K562 (cell line): ENCODE measurements at regions of chr1 and their contacts with region 1.

Region 1: GRCh38 chr1:59971464-59971911 is 44.9 kb upstream of the CYP2J2 start:
- DNase-seq: peak; percentile 72 to 79 (median 76)
- ATAC-seq: peak; percentile 89
- H3K4me3 ChIP-seq: no peak overlapping the region
- H3K27ac ChIP-seq: no peak overlapping the region
- H3K4me1 ChIP-seq: peaks cover 3 to 11% of the 10 kb centered on the region in 2 experiments; a peak in 3 of 5 replicates
- H3K27me3 ChIP-seq: peaks cover 7 to 10% of the 10 kb centered on the region in 2 experiments; a peak in 2 of 5 replicates
- CTCF ChIP-seq: peak; percentile 72 to 88 (median 84)
- EP300 ChIP-seq: no peak
- POLR2A ChIP-seq: no peak
- RAD21 ChIP-seq: peak; percentile 63 to 81

Region 2: GRCh38 chr1:59845091-59845490 is 126.4 kb before region 1 on chr1:
- CTCF ChIA-PET with region 1: no interaction called
- POLR2A ChIA-PET with region 1: no interaction called
- in situ Hi-C with region 1: no loop called
- intact Hi-C with region 1: no loop called
- DNase-seq: no peak
- ATAC-seq: no peak
- H3K4me3 ChIP-seq: no peak overlapping the region
- H3K27ac ChIP-seq: no peak overlapping the region
- H3K4me1 ChIP-seq: no peaks in the 10 kb centered on the region
- H3K27me3 ChIP-seq: no peaks in the 10 kb centered on the region
- CTCF ChIP-seq: no peak
- EP300 ChIP-seq: no peak
- POLR2A ChIP-seq: no peak
- RAD21 ChIP-seq: no peak

Region 3: GRCh38 chr1:60281360-60281932 is 310.0 kb after region 1 on chr1:
- CTCF ChIA-PET with region 1: no interaction called
- POLR2A ChIA-PET with region 1: no interaction called
- in situ Hi-C with region 1: no loop called
- intact Hi-C with region 1: loop called (anchors 10 kb)
- DNase-seq: peak; percentile 13 to 54 (median 34)
- ATAC-seq: peak; percentile 93
- H3K4me3 ChIP-seq: no peak overlapping the region
- H3K27ac ChIP-seq: no peak overlapping the region
- H3K4me1 ChIP-seq: no peaks in the 10 kb centered on the region
- H3K27me3 ChIP-seq: no peaks in the 10 kb centered on the region
- CTCF ChIP-seq: peak; percentile 61 to 79 (median 77)
- EP300 ChIP-seq: no peak
- POLR2A ChIP-seq: no peak
- RAD21 ChIP-seq: peak; percentile 88 to 90

Region 4: DNA sequence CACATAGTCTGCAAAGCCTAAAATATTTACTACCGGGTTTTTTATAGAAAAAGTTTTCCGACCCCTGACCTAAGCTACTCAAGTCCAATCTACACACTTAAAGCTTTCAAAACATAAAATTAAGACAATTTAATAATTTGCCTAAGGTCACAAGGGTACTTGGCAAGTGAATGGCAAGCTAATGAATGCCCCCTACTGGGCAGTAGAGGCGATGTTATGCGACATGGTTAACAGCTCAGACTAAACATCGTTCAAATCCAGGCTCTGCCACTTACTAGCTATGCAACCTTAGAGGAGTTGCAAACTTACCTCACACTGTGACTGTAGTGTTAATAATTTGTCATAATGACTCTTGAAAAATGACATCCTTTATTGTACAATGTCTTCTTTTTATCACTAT is 793.7 kb after region 1 on chr1:
- CTCF ChIA-PET with region 1: interaction called, 3 read pairs
- POLR2A ChIA-PET with region 1: no interaction called
- in situ Hi-C with region 1: no loop called
- intact Hi-C with region 1: loop called (anchors 2 kb)
- DNase-seq: peak; percentile 43 to 58 (median 56)
- ATAC-seq: peak; percentile 97
- H3K4me3 ChIP-seq: no peak overlapping the region
- H3K27ac ChIP-seq: no peak overlapping the region
- H3K4me1 ChIP-seq: no peaks in the 10 kb centered on the region
- H3K27me3 ChIP-seq: no peaks in the 10 kb centered on the region
- CTCF ChIP-seq: peak; percentile 55 to 76 (median 68)
- EP300 ChIP-seq: no peak
- POLR2A ChIP-seq: no peak
- RAD21 ChIP-seq: peak; percentile 50 to 84

Region 5: GRCh38 chr1:60969971-60970509 is 998.6 kb after region 1 on chr1:
- CTCF ChIA-PET with region 1: no interaction called
- POLR2A ChIA-PET with region 1: no interaction called
- in situ Hi-C with region 1: no loop called
- intact Hi-C with region 1: loop called (anchors 5 kb)
- DNase-seq: peak in 2 of 4 experiments; percentile 52 to 55
- ATAC-seq: peak; percentile 83
- H3K4me3 ChIP-seq: no peak overlapping the region
- H3K27ac ChIP-seq: no peak overlapping the region
- H3K4me1 ChIP-seq: peaks cover 3 to 19% of the 10 kb centered on the region in 2 experiments; a peak in 4 of 5 replicates
- H3K27me3 ChIP-seq: no peaks in the 10 kb centered on the region
- CTCF ChIP-seq: peak; percentile 45 to 74 (median 67); a peak in 5 of 6 replicates
- EP300 ChIP-seq: no peak
- POLR2A ChIP-seq: no peak
- RAD21 ChIP-seq: peak; percentile 76 to 89

Region 6: GRCh38 chr1:61453111-61453961 is 1481.8 kb after region 1 on chr1:
- CTCF ChIA-PET with region 1: no interaction called
- POLR2A ChIA-PET with region 1: no interaction called
- in situ Hi-C with region 1: loop called (anchors 25 kb)
- intact Hi-C with region 1: no loop called
- DNase-seq: peak; percentile 59 to 85 (median 68)
- ATAC-seq: peak; percentile 97
- H3K4me3 ChIP-seq: no peak overlapping the region
- H3K27ac ChIP-seq: no peak overlapping the region
- H3K4me1 ChIP-seq: peaks cover 3 to 7% of the 10 kb centered on the region in 2 experiments; a peak in 3 of 5 replicates
- H3K27me3 ChIP-seq: no peaks in the 10 kb centered on the region
- CTCF ChIP-seq: peak; percentile 74 to 85 (median 83)
- EP300 ChIP-seq: no peak
- POLR2A ChIP-seq: no peak
- RAD21 ChIP-seq: peak; percentile 80 to 82

Region 7: DNA sequence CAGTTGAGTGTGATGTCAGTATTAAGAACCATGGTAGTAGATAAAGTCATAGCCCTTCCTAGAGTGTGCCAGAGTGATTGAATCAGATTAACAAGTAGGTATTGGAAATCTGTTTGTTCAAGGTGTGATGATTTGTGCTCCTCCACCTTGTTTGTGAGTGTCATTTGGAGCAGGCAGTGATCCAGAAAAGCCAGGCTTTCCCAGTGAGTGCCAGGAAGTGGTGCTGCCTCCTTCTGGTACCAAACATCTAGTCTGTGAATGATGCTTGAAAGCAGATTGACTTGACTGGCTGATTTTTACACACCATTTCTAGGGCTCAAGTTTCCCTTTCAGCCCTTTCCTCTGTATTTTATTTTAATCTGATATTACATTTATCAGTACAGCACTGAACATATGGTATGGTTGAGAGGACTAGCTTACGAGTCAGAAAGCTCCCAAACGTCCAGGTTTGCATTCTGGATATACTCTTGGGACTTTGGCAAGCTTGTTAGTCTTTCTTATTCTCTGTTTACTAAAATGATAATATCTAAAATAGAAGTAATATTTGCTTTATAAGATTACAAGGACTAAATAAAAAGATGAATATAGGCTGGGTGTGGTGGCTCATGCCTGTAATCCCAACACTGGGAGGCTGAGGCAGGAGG is 1871.5 kb after region 1 on chr1:
- CTCF ChIA-PET with region 1: no interaction called
- POLR2A ChIA-PET with region 1: no interaction called
- in situ Hi-C with region 1: loop called (anchors 10 kb)
- intact Hi-C with region 1: no loop called
- DNase-seq: peak in 1 of 4 experiments; percentile 11
- ATAC-seq: 0 out of 3 replicates have a peak, but pooled peaks have one; percentile 29
- H3K4me3 ChIP-seq: no peak overlapping the region
- H3K27ac ChIP-seq: no peak overlapping the region
- H3K4me1 ChIP-seq: no peaks in the 10 kb centered on the region
- H3K27me3 ChIP-seq: no peaks in the 10 kb centered on the region; a peak in 1 of 5 replicates
- CTCF ChIP-seq: peak in 2 of 3 experiments; percentile 19 to 43; a peak in 2 of 6 replicates
- EP300 ChIP-seq: no peak
- POLR2A ChIP-seq: no peak
- RAD21 ChIP-seq: peak in 1 of 2 experiments; percentile 53; a peak in 2 of 4 replicates